CD8-positive, alpha-beta T cell (primary cell): ENCODE measurements at regions of chr12 and their contacts with region 1.

Region 1: GRCh38 chr12:48924617-48925303 is 532 bp downstream of the FKBP11 start:
- DNase-seq: peak; percentile 65 to 90 (median 83)
- ATAC-seq: peak; percentile 69
- H3K4me3 ChIP-seq: peak overlapping the region; percentile 96 to 99
- H3K4me3 Mint-ChIP-seq: peak overlapping the region; percentile 97
- H3K27ac ChIP-seq: peak overlapping the region; percentile 94
- H3K27ac Mint-ChIP-seq: peak overlapping the region; percentile 97
- H3K4me1 ChIP-seq: peaks cover 24% of the 10 kb centered on the region
- H3K4me1 Mint-ChIP-seq: peaks cover 46% of the 10 kb centered on the region
- H3K27me3 ChIP-seq: no peaks in the 10 kb centered on the region
- H3K27me3 Mint-ChIP-seq: no peaks in the 10 kb centered on the region
- CTCF ChIP-seq: peak; percentile 78

Region 2: GRCh38 chr12:48865434-48866290 is 59.1 kb before region 1 on chr12 and contains the start of gene RND1:
- CTCF ChIA-PET with region 1: interaction called, 4 read pairs
- POLR2A ChIA-PET with region 1: interaction called, 6 read pairs
- intact Hi-C with region 1: loop called in 1 of 2 experiments (anchors 2 kb)
- DNase-seq: peak; percentile 58 to 96 (median 85)
- ATAC-seq: peak; percentile 95
- H3K4me3 ChIP-seq: peak within 1 kb of the TSS; percentile 56 to 74
- H3K4me3 Mint-ChIP-seq: peak within 1 kb of the TSS; percentile 93
- H3K27ac ChIP-seq: peak within 1 kb of the TSS; percentile 19 to 28
- H3K27ac Mint-ChIP-seq: peak within 1 kb of the TSS; percentile 84
- H3K4me1 ChIP-seq: peaks cover 15% of the 10 kb centered on the region
- H3K4me1 Mint-ChIP-seq: peaks cover 27% of the 10 kb centered on the region
- H3K27me3 ChIP-seq: peaks cover 7 to 16% of the 10 kb centered on the region in 2 experiments
- H3K27me3 Mint-ChIP-seq: peaks cover 30% of the 10 kb centered on the region
- CTCF ChIP-seq: no peak
- total RNA-seq, gene RND1: 11.9 to 12.9 TPM

Region 3: DNA sequence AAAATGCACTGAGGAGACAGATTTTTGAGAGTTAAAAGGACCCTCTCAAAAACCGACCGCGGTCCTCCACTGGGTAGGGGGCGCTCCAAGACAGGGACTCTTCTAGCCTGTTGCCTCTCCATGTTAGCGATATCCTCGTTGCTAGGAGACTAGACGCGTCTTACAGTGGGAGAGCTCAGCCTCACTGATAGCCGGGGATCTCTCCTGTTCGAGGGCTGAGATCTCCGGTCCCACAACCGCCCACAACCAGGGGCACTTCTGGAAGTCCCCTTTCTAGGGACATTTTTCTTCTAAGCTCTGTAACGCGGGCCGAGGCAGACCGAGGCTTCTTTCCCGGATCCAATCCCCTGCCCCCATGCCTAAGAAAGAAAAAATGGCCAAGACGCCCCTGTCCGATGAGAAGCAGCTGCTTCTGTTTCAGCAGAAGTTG is 20.8 kb before region 1 on chr12:
- CTCF ChIA-PET with region 1: interaction called, 139 read pairs
- POLR2A ChIA-PET with region 1: interaction called, 5 read pairs
- intact Hi-C with region 1: loop called (anchors 1 to 2 kb)
- DNase-seq: peak; percentile 68 to 93 (median 87)
- ATAC-seq: peak; percentile 99
- H3K4me3 ChIP-seq: peak overlapping the region; percentile 13 to 27
- H3K4me3 Mint-ChIP-seq: peak overlapping the region; percentile 79
- H3K27ac ChIP-seq: no peak overlapping the region
- H3K27ac Mint-ChIP-seq: no peak overlapping the region
- H3K4me1 ChIP-seq: peaks cover 4% of the 10 kb centered on the region
- H3K4me1 Mint-ChIP-seq: peaks cover 11% of the 10 kb centered on the region
- H3K27me3 ChIP-seq: no peaks in the 10 kb centered on the region
- H3K27me3 Mint-ChIP-seq: no peaks in the 10 kb centered on the region
- CTCF ChIP-seq: peak; percentile 79

Region 4: DNA sequence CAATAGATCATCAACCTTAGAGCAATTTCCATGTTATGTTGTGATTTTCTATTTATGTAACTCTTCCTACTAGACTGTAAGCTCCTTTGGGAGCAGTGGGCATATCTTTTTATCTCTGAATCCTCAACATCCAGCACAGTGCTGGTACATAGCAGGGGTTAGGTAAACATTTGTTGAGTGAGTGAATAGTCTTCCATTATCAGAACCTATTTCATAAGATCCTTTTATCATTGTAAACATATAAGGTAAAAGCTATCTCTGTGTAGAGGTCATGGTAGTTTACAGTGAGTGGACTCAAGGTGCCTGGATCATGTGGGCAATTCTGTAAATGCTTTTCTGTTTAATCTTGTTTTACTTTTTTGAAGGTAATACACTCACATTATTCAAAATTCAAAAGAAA is 14.6 kb before region 1 on chr12:
- CTCF ChIA-PET with region 1: interaction called, 139 read pairs
- POLR2A ChIA-PET with region 1: interaction called, 6 read pairs
- intact Hi-C with region 1: loop called in 1 of 2 experiments (anchors 2 kb)
- DNase-seq: no peak
- ATAC-seq: no peak
- H3K4me3 ChIP-seq: no peak overlapping the region
- H3K4me3 Mint-ChIP-seq: no peak overlapping the region
- H3K27ac ChIP-seq: no peak overlapping the region
- H3K27ac Mint-ChIP-seq: no peak overlapping the region
- H3K4me1 ChIP-seq: no peaks in the 10 kb centered on the region
- H3K4me1 Mint-ChIP-seq: no peaks in the 10 kb centered on the region
- H3K27me3 ChIP-seq: no peaks in the 10 kb centered on the region
- H3K27me3 Mint-ChIP-seq: no peaks in the 10 kb centered on the region
- CTCF ChIP-seq: no peak

Region 5: GRCh38 chr12:48977315-48978281 is 52.8 kb after region 1 on chr12:
- CTCF ChIA-PET with region 1: interaction called, 66 read pairs
- POLR2A ChIA-PET with region 1: interaction called, 12 read pairs
- intact Hi-C with region 1: loop called (anchors 2 kb)
- DNase-seq: peak; percentile 59 to 92 (median 84)
- ATAC-seq: peak; percentile 55
- H3K4me3 ChIP-seq: peak overlapping the region; percentile 60 to 77
- H3K4me3 Mint-ChIP-seq: peak overlapping the region; percentile 63
- H3K27ac ChIP-seq: no peak overlapping the region
- H3K27ac Mint-ChIP-seq: peak overlapping the region; percentile 76
- H3K4me1 ChIP-seq: peaks cover 44% of the 10 kb centered on the region
- H3K4me1 Mint-ChIP-seq: peaks cover 46% of the 10 kb centered on the region
- H3K27me3 ChIP-seq: peaks cover 14% of the 10 kb centered on the region in 2 experiments
- H3K27me3 Mint-ChIP-seq: peaks cover 28% of the 10 kb centered on the region
- CTCF ChIP-seq: peak; percentile 92